ENCODE measurements at regions of chr12 and their contacts with region 1.

Region 1: GRCh38 chr12:68290126-68290525 is 36.7 kb upstream of the IL22 start:
- DNase-seq: no peak
- ATAC-seq: no peak
- H3K4me3 ChIP-seq: no peak overlapping the region
- H3K27ac ChIP-seq: no peak overlapping the region
- H3K4me1 ChIP-seq: peaks cover 0 to 18% (median 8%) of the 10 kb centered on the region in 9 donors
- H3K27me3 ChIP-seq: no peaks in the 10 kb centered on the region
- CTCF ChIP-seq: no peak

Region 2: DNA sequence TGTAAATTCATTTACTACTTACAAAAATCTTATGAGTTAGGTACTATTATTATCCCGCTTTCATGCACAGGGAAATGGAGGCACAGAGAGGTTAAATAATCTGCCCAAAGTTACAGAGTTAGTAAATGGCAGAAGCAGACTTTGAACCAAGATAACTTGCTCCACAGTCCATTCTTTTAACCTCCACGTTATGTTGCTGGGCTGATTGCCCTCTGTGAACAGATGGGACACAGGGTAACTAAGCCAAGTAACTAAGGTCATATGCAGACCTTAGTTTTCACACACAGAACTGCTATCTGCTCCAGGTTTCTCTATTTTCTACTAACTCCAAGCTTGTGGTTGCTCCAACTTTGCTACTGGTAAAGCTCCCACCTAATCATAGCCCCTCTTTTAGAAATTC is 448.0 kb before region 1 on chr12:
- intact Hi-C with region 1: no loop called
- DNase-seq: no peak
- ATAC-seq: no peak
- H3K4me3 ChIP-seq: no peak overlapping the region
- H3K27ac ChIP-seq: no peak overlapping the region
- H3K4me1 ChIP-seq: no peaks in the 10 kb centered on the region
- H3K27me3 ChIP-seq: no peaks in the 10 kb centered on the region
- CTCF ChIP-seq: no peak

Region 3: GRCh38 chr12:68158432-68158831 is 131.7 kb before region 1 on chr12:
- intact Hi-C with region 1: no loop called
- DNase-seq: no peak
- ATAC-seq: no peak
- H3K4me3 ChIP-seq: peak overlapping the region in 1 of 10 donors; percentile 24
- H3K27ac ChIP-seq: no peak overlapping the region
- H3K4me1 ChIP-seq: no peaks in the 10 kb centered on the region
- H3K27me3 ChIP-seq: no peaks in the 10 kb centered on the region
- CTCF ChIP-seq: peak in 6 of 9 donors; percentile 10 to 38 (median 21)

Region 4: DNA sequence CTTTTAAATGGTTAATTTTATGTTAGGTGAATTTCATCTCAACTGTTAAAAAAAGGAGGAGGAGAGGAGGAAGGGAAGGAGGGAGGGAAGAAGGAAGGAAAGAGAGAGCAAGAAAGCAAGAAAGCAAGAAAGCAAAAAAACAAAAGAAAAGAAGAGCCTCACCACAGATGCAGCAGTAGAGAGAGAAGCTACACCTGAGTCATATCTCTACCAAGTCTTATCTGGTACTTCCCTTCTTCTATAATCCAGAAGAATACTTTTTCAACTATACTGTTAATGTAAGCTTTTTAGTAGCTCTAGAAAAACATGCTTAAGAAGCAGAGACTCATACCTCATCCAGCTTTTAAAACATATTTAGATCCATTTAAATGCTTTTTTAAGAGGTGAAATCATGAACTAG is 58.9 kb before region 1 on chr12:
- intact Hi-C with region 1: no loop called
- DNase-seq: no peak
- ATAC-seq: no peak
- H3K4me3 ChIP-seq: no peak overlapping the region
- H3K27ac ChIP-seq: no peak overlapping the region
- H3K4me1 ChIP-seq: peaks cover 0 to 2% (median 0%) of the 10 kb centered on the region in 9 donors
- H3K27me3 ChIP-seq: no peaks in the 10 kb centered on the region
- CTCF ChIP-seq: no peak

Region 5: GRCh38 chr12:68482660-68483059 is 192.5 kb after region 1 on chr12:
- intact Hi-C with region 1: no loop called
- DNase-seq: no peak
- ATAC-seq: peak in 2 of 8 donors; percentile 18 to 19
- H3K4me3 ChIP-seq: no peak overlapping the region
- H3K27ac ChIP-seq: peak overlapping the region in 4 of 10 donors; percentile 43 to 65 (median 52)
- H3K4me1 ChIP-seq: peaks cover 0 to 33% (median 0%) of the 10 kb centered on the region in 9 donors
- H3K27me3 ChIP-seq: no peaks in the 10 kb centered on the region
- CTCF ChIP-seq: no peak

Region 6: GRCh38 chr12:69792533-69792932 is 1502.4 kb after region 1 on chr12:
- intact Hi-C with region 1: loop called in 1 of 10 experiments (anchors 5 kb)
- DNase-seq: no peak
- ATAC-seq: no peak
- H3K4me3 ChIP-seq: no peak overlapping the region
- H3K27ac ChIP-seq: no peak overlapping the region
- H3K4me1 ChIP-seq: no peaks in the 10 kb centered on the region
- H3K27me3 ChIP-seq: no peaks in the 10 kb centered on the region
- CTCF ChIP-seq: no peak